ENCODE measurements at regions of chr16 and their contacts with region 1.

Region 1: GRCh38 chr16:28140788-28141618 is 70.8 kb downstream of the XPO6 start:
- DNase-seq: peak; percentile 90
- ATAC-seq: peak; percentile 77
- H3K4me3 ChIP-seq: peak overlapping the region in 4 of 5 experiments; percentile 23 to 53 (median 38)
- H3K4me3 Mint-ChIP-seq: peak overlapping the region; percentile 75
- H3K27ac ChIP-seq: peak overlapping the region; percentile 86 to 96
- H3K27ac Mint-ChIP-seq: peak overlapping the region; percentile 97
- H3K4me1 ChIP-seq: peaks cover 62 to 71% of the 10 kb centered on the region in 2 donors
- H3K4me1 Mint-ChIP-seq: peaks cover 63% of the 10 kb centered on the region
- H3K27me3 ChIP-seq: no peaks in the 10 kb centered on the region
- H3K27me3 Mint-ChIP-seq: no peaks in the 10 kb centered on the region
- CTCF ChIP-seq: peak; percentile 68

Region 2: GRCh38 chr16:26396511-26397235 is 1744.3 kb before region 1 on chr16:
- CTCF ChIA-PET with region 1: no interaction called
- POLR2A ChIA-PET with region 1: no interaction called
- intact Hi-C with region 1: no loop called
- DNase-seq: no peak
- ATAC-seq: no peak
- H3K4me3 ChIP-seq: no peak overlapping the region
- H3K4me3 Mint-ChIP-seq: no peak overlapping the region
- H3K27ac ChIP-seq: no peak overlapping the region
- H3K27ac Mint-ChIP-seq: no peak overlapping the region
- H3K4me1 ChIP-seq: no peaks in the 10 kb centered on the region
- H3K4me1 Mint-ChIP-seq: no peaks in the 10 kb centered on the region
- H3K27me3 ChIP-seq: no peaks in the 10 kb centered on the region
- H3K27me3 Mint-ChIP-seq: no peaks in the 10 kb centered on the region
- CTCF ChIP-seq: no peak

Region 3: DNA sequence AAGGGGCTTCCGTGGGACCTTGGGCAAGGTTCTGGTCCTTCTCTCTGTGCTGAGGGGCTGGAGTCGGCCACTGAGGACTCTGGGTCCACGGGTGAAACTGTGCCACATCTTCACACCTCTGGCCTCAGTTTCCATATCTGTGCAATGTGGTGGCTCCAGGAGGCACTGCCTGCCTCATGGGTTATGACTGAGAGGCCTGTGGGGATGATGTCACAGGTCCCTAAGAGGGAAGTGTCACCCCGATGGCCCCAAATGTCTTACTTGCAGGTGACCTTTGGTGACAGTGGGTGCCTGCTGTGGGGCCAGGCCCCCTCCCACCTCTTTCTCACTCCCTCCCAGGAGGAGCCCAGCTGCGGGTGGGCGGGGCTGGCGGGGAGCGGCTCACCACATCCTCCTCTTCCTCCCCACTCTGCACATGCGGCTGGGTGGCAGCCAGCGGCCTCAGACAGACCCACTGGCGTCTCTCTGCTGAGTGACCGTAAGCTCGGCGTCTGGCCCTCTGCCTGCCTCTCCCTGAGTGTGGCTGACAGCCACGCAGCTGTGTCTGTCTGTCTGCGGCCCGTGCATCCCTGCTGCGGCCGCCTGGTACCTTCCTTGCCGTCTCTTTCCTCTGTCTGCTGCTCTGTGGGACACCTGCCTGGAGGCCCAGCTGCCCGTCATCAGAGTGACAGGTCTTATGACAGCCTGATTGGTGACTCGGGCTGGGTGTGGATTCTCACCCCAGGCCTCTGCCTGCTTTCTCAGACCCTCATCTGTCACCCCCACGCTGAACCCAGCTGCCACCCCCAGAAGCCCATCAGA is 739.0 kb before region 1 on chr16 and contains the start of gene IL21R:
- CTCF ChIA-PET with region 1: no interaction called
- POLR2A ChIA-PET with region 1: no interaction called
- intact Hi-C with region 1: loop called (anchors 5 kb)
- DNase-seq: peak; percentile 91
- ATAC-seq: peak; percentile 64
- H3K4me3 ChIP-seq: peak within 1 kb of the TSS; percentile 54 to 90 (median 86)
- H3K4me3 Mint-ChIP-seq: peak within 1 kb of the TSS; percentile 98
- H3K27ac ChIP-seq: peak within 1 kb of the TSS; percentile 90 to 96
- H3K27ac Mint-ChIP-seq: peak within 1 kb of the TSS; percentile 97
- H3K4me1 ChIP-seq: peaks cover 83 to 99% of the 10 kb centered on the region in 2 donors
- H3K4me1 Mint-ChIP-seq: peaks cover 90% of the 10 kb centered on the region
- H3K27me3 ChIP-seq: no peaks in the 10 kb centered on the region
- H3K27me3 Mint-ChIP-seq: no peaks in the 10 kb centered on the region
- CTCF ChIP-seq: no peak
- total RNA-seq, gene IL21R: 28.5 and 31.6 TPM in 2 replicates

Region 4: DNA sequence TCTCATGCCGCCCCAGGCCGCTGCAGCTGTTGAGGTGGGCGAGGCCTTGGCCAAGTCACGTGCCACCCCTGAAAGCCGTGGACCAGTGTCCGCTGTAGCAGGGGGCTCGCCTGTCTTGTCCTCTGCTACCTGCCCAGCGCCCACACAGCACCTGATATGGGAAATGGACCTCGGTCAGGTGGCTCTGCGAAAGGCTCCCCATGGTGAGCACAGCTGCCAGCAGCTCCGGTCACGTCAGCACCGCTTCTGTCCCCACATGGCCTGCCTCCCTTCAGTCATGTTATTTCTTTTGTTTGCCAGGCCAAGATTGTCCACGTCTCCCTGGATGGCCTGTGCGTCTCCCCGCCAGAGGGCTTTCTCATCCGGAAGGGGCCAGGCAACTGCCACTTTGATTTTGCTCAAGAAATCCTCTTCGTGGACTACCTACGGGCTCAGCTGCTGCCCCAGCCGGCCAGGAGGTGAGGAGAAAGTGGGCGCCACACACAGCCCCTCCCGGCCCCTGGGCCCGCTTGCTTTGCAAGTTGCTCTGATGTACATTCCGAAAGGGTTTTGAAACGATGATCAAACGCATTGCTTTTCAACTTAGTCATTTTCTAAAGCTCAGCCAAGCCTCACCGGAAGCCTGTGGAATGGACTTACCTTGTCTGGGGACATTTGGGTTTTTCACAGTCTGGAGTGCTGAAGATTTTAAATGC is 371.3 kb before region 1 on chr16:
- CTCF ChIA-PET with region 1: no interaction called
- POLR2A ChIA-PET with region 1: no interaction called
- intact Hi-C with region 1: no loop called
- DNase-seq: no peak
- ATAC-seq: no peak
- H3K4me3 ChIP-seq: no peak overlapping the region
- H3K4me3 Mint-ChIP-seq: no peak overlapping the region
- H3K27ac ChIP-seq: no peak overlapping the region
- H3K27ac Mint-ChIP-seq: no peak overlapping the region
- H3K4me1 ChIP-seq: no peaks in the 10 kb centered on the region
- H3K4me1 Mint-ChIP-seq: no peaks in the 10 kb centered on the region
- H3K27me3 ChIP-seq: no peaks in the 10 kb centered on the region
- H3K27me3 Mint-ChIP-seq: no peaks in the 10 kb centered on the region
- CTCF ChIP-seq: no peak

Region 5: DNA sequence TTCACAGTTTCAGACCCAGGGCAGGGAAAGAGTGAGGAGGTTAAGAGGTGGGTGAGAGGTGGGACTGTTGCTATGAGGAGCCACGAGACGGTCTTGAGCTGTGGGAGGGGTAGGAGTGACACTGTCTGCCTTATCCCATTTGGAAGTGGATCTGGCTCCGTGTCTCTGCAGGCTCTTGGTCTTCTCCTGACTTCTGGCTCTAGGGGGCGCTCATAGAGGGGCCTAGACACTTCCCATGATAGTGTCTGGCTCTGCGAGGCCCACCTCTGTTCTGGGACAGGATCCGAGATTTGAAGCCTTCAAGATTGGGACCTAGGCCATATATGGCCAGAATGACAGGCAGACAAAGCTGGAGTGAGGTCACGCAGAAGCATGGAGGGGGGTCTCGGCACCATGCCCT is 282.0 kb before region 1 on chr16:
- CTCF ChIA-PET with region 1: no interaction called
- POLR2A ChIA-PET with region 1: no interaction called
- intact Hi-C with region 1: no loop called
- DNase-seq: no peak
- ATAC-seq: no peak
- H3K4me3 ChIP-seq: no peak overlapping the region
- H3K4me3 Mint-ChIP-seq: no peak overlapping the region
- H3K27ac ChIP-seq: no peak overlapping the region
- H3K27ac Mint-ChIP-seq: no peak overlapping the region
- H3K4me1 ChIP-seq: no peaks in the 10 kb centered on the region
- H3K4me1 Mint-ChIP-seq: no peaks in the 10 kb centered on the region
- H3K27me3 ChIP-seq: no peaks in the 10 kb centered on the region
- H3K27me3 Mint-ChIP-seq: no peaks in the 10 kb centered on the region
- CTCF ChIP-seq: no peak

Region 6: GRCh38 chr16:28164140-28164539 is 23.1 kb after region 1 on chr16:
- CTCF ChIA-PET with region 1: interaction called, 11 read pairs
- POLR2A ChIA-PET with region 1: no interaction called
- intact Hi-C with region 1: no loop called
- DNase-seq: no peak
- ATAC-seq: no peak
- H3K4me3 ChIP-seq: no peak overlapping the region
- H3K4me3 Mint-ChIP-seq: no peak overlapping the region
- H3K27ac ChIP-seq: peak overlapping the region; percentile 3 to 77
- H3K27ac Mint-ChIP-seq: peak overlapping the region; percentile 46
- H3K4me1 ChIP-seq: peaks cover 48 to 53% of the 10 kb centered on the region in 2 donors
- H3K4me1 Mint-ChIP-seq: peaks cover 70% of the 10 kb centered on the region
- H3K27me3 ChIP-seq: no peaks in the 10 kb centered on the region
- H3K27me3 Mint-ChIP-seq: no peaks in the 10 kb centered on the region
- CTCF ChIP-seq: no peak

Region 7: DNA sequence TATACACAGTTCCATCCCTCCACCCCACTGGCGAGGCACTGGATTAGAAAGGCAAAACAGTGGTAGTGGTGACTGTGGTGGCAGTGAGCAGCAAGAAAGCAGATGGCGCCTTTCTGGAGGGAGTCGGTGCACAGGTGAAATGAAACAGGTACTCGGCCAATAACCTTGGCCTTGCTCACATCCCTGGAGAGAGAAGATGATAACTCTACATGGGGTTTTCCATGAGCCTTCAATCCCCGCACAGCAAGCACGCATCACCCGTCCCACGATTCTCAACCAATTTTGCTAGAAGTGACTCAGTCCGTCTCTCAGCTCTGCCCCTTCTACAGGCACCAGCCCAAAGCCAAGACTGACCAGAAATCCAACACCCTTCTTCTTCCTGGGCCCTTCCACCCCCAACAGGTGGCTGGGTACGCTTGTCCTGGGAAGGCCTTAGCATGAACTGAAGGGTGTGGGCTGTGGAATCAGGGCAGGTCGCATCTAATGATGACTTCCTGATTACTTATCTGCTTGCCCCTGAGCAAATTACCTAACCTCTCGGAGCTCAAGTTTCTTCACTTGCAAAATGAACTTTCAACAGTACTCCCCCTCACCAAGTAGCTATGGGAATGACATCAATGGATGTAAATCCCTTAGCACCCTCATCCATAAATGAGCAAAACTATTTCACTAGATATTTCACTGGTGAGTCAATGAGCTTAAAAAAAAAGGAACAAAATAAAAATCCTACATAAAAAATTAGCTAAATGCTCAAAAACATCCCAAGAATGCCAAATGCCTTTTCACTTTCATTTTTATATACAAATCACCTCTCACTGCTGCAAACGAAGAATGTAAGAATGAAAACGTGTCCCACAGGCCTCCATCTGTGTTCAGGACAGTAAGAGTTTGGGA is 52.8 kb after region 1 on chr16:
- CTCF ChIA-PET with region 1: interaction called, 14 read pairs
- POLR2A ChIA-PET with region 1: interaction called, 5 read pairs
- intact Hi-C with region 1: loop called (anchors 1 kb)
- DNase-seq: no peak
- ATAC-seq: no peak
- H3K4me3 ChIP-seq: peak overlapping the region in 4 of 5 experiments; percentile 6 to 66 (median 28)
- H3K4me3 Mint-ChIP-seq: peak overlapping the region; percentile 87
- H3K27ac ChIP-seq: peak overlapping the region; percentile 86 to 92
- H3K27ac Mint-ChIP-seq: peak overlapping the region; percentile 96
- H3K4me1 ChIP-seq: peaks cover 66 to 76% of the 10 kb centered on the region in 2 donors
- H3K4me1 Mint-ChIP-seq: peaks cover 78% of the 10 kb centered on the region
- H3K27me3 ChIP-seq: no peaks in the 10 kb centered on the region
- H3K27me3 Mint-ChIP-seq: no peaks in the 10 kb centered on the region
- CTCF ChIP-seq: no peak

Region 8: GRCh38 chr16:28218104-28218503 is 77.1 kb after region 1 on chr16:
- CTCF ChIA-PET with region 1: interaction called, 33 read pairs
- POLR2A ChIA-PET with region 1: interaction called, 8 read pairs
- intact Hi-C with region 1: loop called (anchors 2 kb)
- DNase-seq: peak; percentile 78
- ATAC-seq: peak; percentile 88
- H3K4me3 ChIP-seq: no peak overlapping the region
- H3K4me3 Mint-ChIP-seq: no peak overlapping the region
- H3K27ac ChIP-seq: no peak overlapping the region
- H3K27ac Mint-ChIP-seq: no peak overlapping the region
- H3K4me1 ChIP-seq: no peaks in the 10 kb centered on the region
- H3K4me1 Mint-ChIP-seq: no peaks in the 10 kb centered on the region
- H3K27me3 ChIP-seq: no peaks in the 10 kb centered on the region
- H3K27me3 Mint-ChIP-seq: no peaks in the 10 kb centered on the region
- CTCF ChIP-seq: peak; percentile 68